Right cardiac atrium (tissue), 5 donors: ENCODE measurements at regions of chr6 and their contacts with region 1.

Region 1: DNA sequence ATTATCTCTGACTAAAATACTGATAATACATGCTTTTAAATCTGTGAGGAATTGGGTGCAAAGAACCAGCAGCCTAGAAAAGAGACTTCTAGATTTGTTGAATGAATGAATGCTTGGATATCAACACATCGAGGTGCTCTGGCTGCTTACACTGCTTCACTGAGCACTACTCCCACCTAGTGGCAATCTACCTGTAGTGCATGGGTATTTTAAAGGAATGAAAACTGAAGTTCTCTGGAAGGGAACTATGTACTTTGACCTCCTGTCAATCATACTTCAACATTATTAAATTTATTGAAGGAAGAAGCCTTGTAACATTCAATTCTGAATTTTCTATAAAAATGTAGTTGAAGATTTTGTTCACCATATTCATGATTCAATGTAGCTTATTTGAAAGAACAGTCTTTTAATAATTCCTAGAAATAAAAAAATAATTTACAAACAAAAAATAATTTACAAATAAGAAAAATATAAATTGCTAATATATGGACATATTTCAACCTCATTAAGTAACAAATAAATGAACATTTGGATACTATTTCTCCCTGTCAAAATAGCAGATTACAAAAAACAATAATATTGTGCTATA is 111.2 kb upstream of the MMS22L start:
- DNase-seq: peak in 1 of 3 donors; percentile 6
- ATAC-seq: peak in 1 of 2 donors; percentile 53
- H3K4me3 ChIP-seq: no peak overlapping the region
- H3K27ac ChIP-seq: no peak overlapping the region
- H3K4me1 ChIP-seq: no peaks in the 10 kb centered on the region
- H3K27me3 ChIP-seq: no peaks in the 10 kb centered on the region

Region 2: GRCh38 chr6:97068211-97068610 is 326.0 kb before region 1 on chr6:
- intact Hi-C with region 1: loop called in 2 of 4 experiments (anchors 10 kb)
- DNase-seq: no peak
- ATAC-seq: no peak
- H3K4me3 ChIP-seq: no peak overlapping the region
- H3K27ac ChIP-seq: no peak overlapping the region
- H3K4me1 ChIP-seq: no peaks in the 10 kb centered on the region
- H3K27me3 ChIP-seq: no peaks in the 10 kb centered on the region

Region 3: GRCh38 chr6:97186416-97186999 is 207.7 kb before region 1 on chr6:
- intact Hi-C with region 1: loop called (anchors 5 to 10 kb)
- DNase-seq: peak; percentile 47 to 80 (median 71)
- ATAC-seq: peak; percentile 57 to 60
- H3K4me3 ChIP-seq: no peak overlapping the region
- H3K27ac ChIP-seq: no peak overlapping the region
- H3K4me1 ChIP-seq: no peaks in the 10 kb centered on the region
- H3K27me3 ChIP-seq: no peaks in the 10 kb centered on the region

Region 4: DNA sequence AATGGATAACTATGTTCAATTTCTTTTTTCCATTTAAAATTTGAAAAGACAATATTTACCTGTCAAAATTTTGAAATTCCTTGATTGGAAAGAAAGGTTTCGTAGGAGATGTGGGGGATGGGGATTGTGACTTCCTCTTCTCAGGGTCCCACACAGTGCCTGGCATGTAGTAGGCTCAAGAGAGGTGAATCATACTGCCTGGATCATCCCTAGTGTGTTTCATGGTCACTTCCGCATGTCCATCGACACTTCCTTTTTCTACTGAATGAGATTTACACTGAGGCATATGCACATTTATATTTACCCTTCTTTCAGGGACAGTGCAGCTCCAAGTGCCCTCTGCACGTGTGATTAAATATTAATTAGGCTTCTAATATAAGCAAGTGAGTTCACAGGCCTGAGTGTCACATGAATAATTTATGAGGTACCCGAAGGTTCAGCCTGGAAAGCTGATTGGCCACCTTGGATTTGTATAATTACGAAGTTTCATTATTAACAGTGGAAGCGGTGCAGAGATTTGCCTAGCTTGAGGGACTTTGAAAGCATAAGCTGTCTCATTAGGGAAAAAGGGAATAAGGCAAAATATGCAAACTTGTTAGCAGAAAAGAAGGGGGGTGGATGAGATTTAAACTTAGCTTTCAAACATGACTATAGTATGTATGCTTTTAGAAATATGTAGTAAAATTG is 66.3 kb after region 1 on chr6:
- intact Hi-C with region 1: no loop called
- DNase-seq: no peak
- ATAC-seq: no peak
- H3K4me3 ChIP-seq: no peak overlapping the region
- H3K27ac ChIP-seq: no peak overlapping the region
- H3K4me1 ChIP-seq: no peaks in the 10 kb centered on the region
- H3K27me3 ChIP-seq: no peaks in the 10 kb centered on the region

Region 5: GRCh38 chr6:97572943-97573342 is 178.7 kb after region 1 on chr6:
- intact Hi-C with region 1: no loop called
- DNase-seq: no peak
- ATAC-seq: no peak
- H3K4me3 ChIP-seq: no peak overlapping the region
- H3K27ac ChIP-seq: no peak overlapping the region
- H3K4me1 ChIP-seq: no peaks in the 10 kb centered on the region
- H3K27me3 ChIP-seq: no peaks in the 10 kb centered on the region

Region 6: GRCh38 chr6:97594844-97595243 is 200.6 kb after region 1 on chr6:
- intact Hi-C with region 1: no loop called
- DNase-seq: no peak
- ATAC-seq: peak; percentile 86 to 88
- H3K4me3 ChIP-seq: no peak overlapping the region
- H3K27ac ChIP-seq: peak overlapping the region; percentile 90
- H3K4me1 ChIP-seq: no peaks in the 10 kb centered on the region
- H3K27me3 ChIP-seq: no peaks in the 10 kb centered on the region